Activated CD8-positive, alpha-beta T cell treated with anti-CD3 and anti-CD28 coated beads, Interleukin-2, amount 10 ng/mL, durations not matched to agents 7 days and 5 days (primary cell): ENCODE measurements at regions of chr1 and their contacts with region 1.

Region 1: GRCh38 chr1:27416387-27417111 is 24.1 kb downstream of the GPR3 start:
- DNase-seq: peak; percentile 72
- ATAC-seq: peak; percentile 77
- H3K4me3 Mint-ChIP-seq: no peak overlapping the region
- H3K27ac Mint-ChIP-seq: peak overlapping the region; percentile 1
- H3K4me1 Mint-ChIP-seq: peaks cover 24% of the 10 kb centered on the region
- H3K27me3 Mint-ChIP-seq: no peaks in the 10 kb centered on the region

Region 2: DNA sequence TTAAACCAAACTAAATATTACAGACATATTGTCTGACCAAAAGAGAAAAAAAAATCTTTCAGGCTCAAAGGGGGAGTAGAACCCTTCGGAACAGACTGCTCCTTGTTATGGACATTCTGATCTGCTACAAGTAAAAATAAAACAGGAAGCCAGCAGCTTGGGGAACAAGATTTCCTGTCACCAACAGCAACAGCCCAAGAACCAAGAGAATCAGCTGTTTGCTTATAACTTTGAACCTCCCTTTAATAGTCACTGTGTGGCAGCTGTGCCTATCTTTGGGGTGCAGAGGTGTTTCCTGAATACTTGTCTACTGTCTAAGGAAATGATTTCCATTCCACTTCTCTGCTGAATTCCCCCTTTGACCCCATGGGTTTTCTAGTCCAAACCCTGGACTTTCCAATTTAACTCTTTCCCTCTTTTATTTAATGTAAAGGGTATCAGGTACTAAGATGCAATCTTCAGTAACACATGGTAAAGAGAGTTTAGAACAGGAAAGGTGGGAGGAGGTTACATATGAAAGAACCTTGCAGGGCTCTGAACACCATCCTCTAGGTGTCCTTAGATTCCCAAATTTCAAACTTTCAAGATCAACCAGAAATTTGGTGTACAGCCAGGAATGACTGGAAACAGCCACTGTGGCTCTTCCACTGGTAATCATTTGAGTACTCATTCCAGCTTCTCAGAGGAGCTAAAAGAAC is 14.5 kb after region 1 on chr1:
- CTCF ChIA-PET with region 1: interaction called, 20 read pairs
- POLR2A ChIA-PET with region 1: no interaction called
- DNase-seq: peak; percentile 44
- ATAC-seq: peak; percentile 78
- H3K4me3 Mint-ChIP-seq: peak overlapping the region; percentile 47
- H3K27ac Mint-ChIP-seq: peak overlapping the region; percentile 70
- H3K4me1 Mint-ChIP-seq: peaks cover 56% of the 10 kb centered on the region
- H3K27me3 Mint-ChIP-seq: no peaks in the 10 kb centered on the region

Region 3: DNA sequence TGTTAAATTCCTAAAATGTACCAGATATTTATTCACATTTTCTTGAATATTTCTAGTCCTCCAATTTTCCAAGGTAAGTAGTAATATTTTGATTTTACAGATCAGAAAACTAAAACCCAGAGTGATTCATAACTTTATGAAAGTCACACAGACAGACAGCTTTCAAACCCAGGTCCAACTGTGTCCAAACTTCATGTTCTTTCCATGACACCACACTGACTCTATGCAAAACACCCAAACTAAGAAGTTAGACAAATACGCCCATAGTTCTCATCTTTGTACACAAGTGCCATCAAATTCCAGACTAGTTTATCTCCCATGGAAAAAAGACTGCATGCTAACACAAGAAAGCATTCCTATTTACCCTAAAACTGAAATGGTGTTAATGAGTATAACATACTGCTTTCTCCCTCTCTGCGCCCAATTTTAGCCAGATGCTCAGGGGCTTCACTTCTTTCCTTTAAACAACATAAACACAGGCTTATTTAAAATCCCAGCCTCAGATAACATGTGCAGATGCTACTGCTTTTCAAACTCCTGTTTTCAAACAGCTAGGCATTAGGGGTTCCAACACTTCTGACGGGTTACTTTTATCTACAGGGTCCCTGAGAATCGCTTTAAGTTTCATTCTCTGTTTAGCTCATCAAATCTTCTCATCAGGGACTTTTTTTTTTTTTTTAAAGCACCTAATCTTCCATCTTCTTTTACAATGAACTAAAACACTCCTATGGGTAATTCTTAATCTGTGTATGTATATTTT is 28.8 kb after region 1 on chr1:
- CTCF ChIA-PET with region 1: interaction called, 11 read pairs
- POLR2A ChIA-PET with region 1: no interaction called
- DNase-seq: no peak
- ATAC-seq: peak; percentile 68
- H3K4me3 Mint-ChIP-seq: no peak overlapping the region
- H3K27ac Mint-ChIP-seq: peak overlapping the region; percentile 59
- H3K4me1 Mint-ChIP-seq: peaks cover 35% of the 10 kb centered on the region
- H3K27me3 Mint-ChIP-seq: no peaks in the 10 kb centered on the region

Region 4: DNA sequence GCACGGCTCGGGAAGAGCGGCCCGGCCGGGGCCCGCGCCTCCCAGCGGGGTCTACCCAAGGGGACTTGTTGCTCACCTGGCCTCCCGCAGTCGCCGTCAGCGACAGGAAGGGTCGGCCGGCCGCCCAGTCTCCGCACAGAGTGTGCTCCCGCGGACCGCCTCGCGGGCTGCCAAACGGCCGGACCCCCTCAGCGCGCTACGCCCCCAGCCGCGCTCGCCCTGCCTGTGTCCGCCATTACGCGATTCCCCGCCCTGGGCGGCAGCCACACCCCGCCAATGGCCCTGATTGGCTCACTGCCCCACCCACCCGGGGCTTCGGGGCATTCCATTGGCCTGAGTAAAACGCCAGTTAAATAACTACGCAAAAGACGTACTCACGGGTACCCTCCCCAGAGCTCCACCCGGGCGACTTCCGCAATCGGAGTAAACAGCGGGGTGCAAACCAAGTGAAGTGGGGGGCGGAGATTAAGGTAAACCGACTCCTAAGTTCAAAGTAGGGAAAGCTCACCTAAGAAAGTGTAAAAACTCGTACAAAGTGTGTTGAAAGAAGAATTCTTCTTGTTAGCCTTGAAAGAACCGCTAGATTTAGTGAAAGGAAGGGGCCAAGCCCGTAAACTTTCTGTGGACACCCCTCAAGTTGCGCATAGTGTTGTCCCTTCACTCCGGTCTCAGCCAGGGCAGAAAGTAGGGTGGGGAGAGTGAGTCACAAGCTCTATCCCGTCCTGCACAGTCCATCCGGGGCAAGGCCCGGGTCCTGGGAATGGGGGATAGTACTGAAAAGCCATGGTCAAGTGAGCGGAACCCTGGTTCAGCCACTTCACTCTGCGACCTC is 73.6 kb after region 1 on chr1 and contains the start of gene WASF2:
- CTCF ChIA-PET with region 1: interaction called, 19 read pairs
- POLR2A ChIA-PET with region 1: no interaction called
- DNase-seq: peak; percentile 98
- ATAC-seq: peak; percentile 94
- H3K4me3 Mint-ChIP-seq: peak within 1 kb of the TSS; percentile 83
- H3K27ac Mint-ChIP-seq: peak within 1 kb of the TSS; percentile 99
- H3K4me1 Mint-ChIP-seq: peaks cover 28% of the 10 kb centered on the region
- H3K27me3 Mint-ChIP-seq: no peaks in the 10 kb centered on the region
- total RNA-seq, gene WASF2: 120 to 127 TPM